IMR-90 (cell line): ENCODE measurements at regions of chr15 and their contacts with region 1.

Region 1: GRCh38 chr15:95291898-95292472 is 1038.5 kb upstream of the NR2F2 start:
- DNase-seq: peak; percentile 56
- ATAC-seq: no peak
- H3K4me3 ChIP-seq: no peak overlapping the region
- H3K27ac ChIP-seq: no peak overlapping the region
- H3K4me1 ChIP-seq: peaks cover 15% of the 10 kb centered on the region
- H3K27me3 ChIP-seq: no peaks in the 10 kb centered on the region
- CTCF ChIP-seq: peak; percentile 59
- POLR2A ChIP-seq: no peak
- RAD21 ChIP-seq: peak; percentile 52

Region 2: GRCh38 chr15:95041299-95041698 is 250.7 kb before region 1 on chr15:
- CTCF ChIA-PET with region 1: no interaction called
- POLR2A ChIA-PET with region 1: no interaction called
- dilution Hi-C with region 1: no loop called
- in situ Hi-C with region 1: no loop called
- intact Hi-C with region 1: no loop called
- DNase-seq: no peak
- ATAC-seq: no peak
- H3K4me3 ChIP-seq: no peak overlapping the region
- H3K27ac ChIP-seq: no peak overlapping the region
- H3K4me1 ChIP-seq: no peaks in the 10 kb centered on the region
- H3K27me3 ChIP-seq: no peaks in the 10 kb centered on the region
- CTCF ChIP-seq: no peak
- POLR2A ChIP-seq: no peak
- RAD21 ChIP-seq: no peak

Region 3: GRCh38 chr15:95277266-95277665 is 14.7 kb before region 1 on chr15:
- CTCF ChIA-PET with region 1: interaction called, 3 read pairs
- POLR2A ChIA-PET with region 1: no interaction called
- dilution Hi-C with region 1: no loop called
- in situ Hi-C with region 1: no loop called
- intact Hi-C with region 1: loop called (anchors 2 kb)
- DNase-seq: peak; percentile 98
- ATAC-seq: peak; percentile 87
- H3K4me3 ChIP-seq: no peak overlapping the region
- H3K27ac ChIP-seq: peak overlapping the region; percentile 86
- H3K4me1 ChIP-seq: peaks cover 16% of the 10 kb centered on the region
- H3K27me3 ChIP-seq: no peaks in the 10 kb centered on the region
- CTCF ChIP-seq: no peak
- POLR2A ChIP-seq: no peak
- RAD21 ChIP-seq: peak; percentile 21

Region 4: GRCh38 chr15:96403071-96403470 is 1111.1 kb after region 1 on chr15:
- CTCF ChIA-PET with region 1: no interaction called
- POLR2A ChIA-PET with region 1: interaction called, 21 read pairs
- dilution Hi-C with region 1: no loop called
- in situ Hi-C with region 1: no loop called
- intact Hi-C with region 1: no loop called
- DNase-seq: no peak
- ATAC-seq: no peak
- H3K4me3 ChIP-seq: no peak overlapping the region
- H3K27ac ChIP-seq: no peak overlapping the region
- H3K4me1 ChIP-seq: no peaks in the 10 kb centered on the region
- H3K27me3 ChIP-seq: peaks cover 28% of the 10 kb centered on the region
- CTCF ChIP-seq: no peak
- POLR2A ChIP-seq: no peak
- RAD21 ChIP-seq: no peak